HepG2 (cell line): ENCODE measurements at regions of chr12 and their contacts with region 1.

Region 1: GRCh38 chr12:66960704-66961690 is 282.1 kb upstream of the GRIP1 start:
- DNase-seq: no peak
- ATAC-seq: no peak
- H3K4me3 ChIP-seq: no peak overlapping the region
- H3K27ac ChIP-seq: no peak overlapping the region
- H3K4me1 ChIP-seq: no peaks in the 10 kb centered on the region
- H3K27me3 ChIP-seq: no peaks in the 10 kb centered on the region; a peak in 1 of 5 replicates
- CTCF ChIP-seq: no peak
- EP300 ChIP-seq: no peak
- POLR2A ChIP-seq: no peak
- RAD21 ChIP-seq: no peak

Region 2: DNA sequence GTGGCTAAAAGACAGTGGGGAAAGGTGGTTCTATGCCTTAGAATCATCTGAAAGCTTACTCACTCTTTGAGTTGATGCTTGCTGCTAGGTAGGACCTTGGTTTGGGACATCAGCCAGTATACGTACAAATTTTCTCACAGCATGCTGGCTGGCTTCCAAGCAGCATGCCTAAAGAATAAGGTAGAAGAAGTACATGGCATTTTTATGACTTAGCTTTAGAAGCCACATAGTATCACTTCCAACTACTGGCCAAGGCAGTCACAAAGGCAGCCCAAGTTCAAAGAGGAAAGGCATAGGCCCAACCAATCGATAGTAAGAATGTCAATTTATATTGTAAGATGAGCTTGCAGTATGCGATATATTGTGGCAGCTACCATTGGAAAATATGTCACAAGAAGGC is 24.0 kb after region 1 on chr12:
- CTCF ChIA-PET with region 1: no interaction called
- POLR2A ChIA-PET with region 1: no interaction called
- in situ Hi-C with region 1: no loop called
- intact Hi-C with region 1: loop called (anchors 1 kb)
- DNase-seq: no peak
- ATAC-seq: no peak
- H3K4me3 ChIP-seq: no peak overlapping the region
- H3K27ac ChIP-seq: no peak overlapping the region
- H3K4me1 ChIP-seq: no peaks in the 10 kb centered on the region
- H3K27me3 ChIP-seq: no peaks in the 10 kb centered on the region; a peak in 1 of 5 replicates
- CTCF ChIP-seq: no peak
- EP300 ChIP-seq: no peak
- POLR2A ChIP-seq: no peak
- RAD21 ChIP-seq: no peak